OCI-LY7 (cell line): ENCODE measurements at regions of chr1 and their contacts with region 1.

Region 1: GRCh38 chr1:226424228-226425003 is 16.5 kb upstream of the PARP1 start:
- DNase-seq: peak; percentile 87
- H3K4me3 ChIP-seq: peak overlapping the region; percentile 51
- H3K27ac ChIP-seq: peak overlapping the region; percentile 66
- H3K4me1 ChIP-seq: peaks cover 65% of the 10 kb centered on the region
- CTCF ChIP-seq: peak; percentile 98

Region 2: GRCh38 chr1:226438007-226438406 is 13.6 kb after region 1 on chr1:
- CTCF ChIA-PET with region 1: interaction called, 9 read pairs
- POLR2A ChIA-PET with region 1: interaction called, 25 read pairs
- intact Hi-C with region 1: loop called (anchors 1 kb)
- DNase-seq: no peak
- H3K4me3 ChIP-seq: peak overlapping the region; percentile 54
- H3K27ac ChIP-seq: peak overlapping the region; percentile 92
- H3K4me1 ChIP-seq: peaks cover 77% of the 10 kb centered on the region
- CTCF ChIP-seq: peak; percentile 54

Region 3: GRCh38 chr1:226444901-226445300 is 20.5 kb after region 1 on chr1:
- CTCF ChIA-PET with region 1: interaction called, 16 read pairs
- POLR2A ChIA-PET with region 1: interaction called, 17 read pairs
- intact Hi-C with region 1: loop called (anchors 1 kb)
- DNase-seq: peak; percentile 97
- H3K4me3 ChIP-seq: peak overlapping the region; percentile 42
- H3K27ac ChIP-seq: peak overlapping the region; percentile 93
- H3K4me1 ChIP-seq: peaks cover 58% of the 10 kb centered on the region
- CTCF ChIP-seq: peak; percentile 81

Region 4: DNA sequence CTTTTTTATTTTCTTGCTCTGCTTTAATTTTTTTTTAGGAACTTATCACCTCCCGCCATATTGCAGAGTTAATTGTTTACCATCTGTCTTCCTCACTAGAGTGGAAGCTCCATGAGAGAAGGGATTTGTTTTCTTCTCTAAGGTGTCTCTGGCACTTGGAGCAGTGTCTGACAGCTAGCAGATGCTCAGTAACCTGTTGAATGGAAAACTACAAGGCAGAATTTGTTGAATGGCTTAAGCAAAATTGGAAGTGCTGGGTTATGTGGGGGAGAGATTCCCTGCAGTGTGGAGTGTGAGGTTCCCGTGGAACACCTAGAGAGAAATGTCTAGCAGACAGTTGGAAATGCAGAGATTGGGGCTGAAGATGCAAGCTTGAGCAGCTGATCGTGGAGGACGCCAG is 43.0 kb after region 1 on chr1:
- CTCF ChIA-PET with region 1: no interaction called
- POLR2A ChIA-PET with region 1: no interaction called
- intact Hi-C with region 1: no loop called
- DNase-seq: no peak
- H3K4me3 ChIP-seq: no peak overlapping the region
- H3K27ac ChIP-seq: no peak overlapping the region
- H3K4me1 ChIP-seq: no peaks in the 10 kb centered on the region
- CTCF ChIP-seq: no peak

Region 5: GRCh38 chr1:226547754-226548191 is 123.4 kb after region 1 on chr1:
- CTCF ChIA-PET with region 1: interaction called, 5 read pairs
- POLR2A ChIA-PET with region 1: interaction called, 5 read pairs
- intact Hi-C with region 1: loop called (anchors 1 kb)
- DNase-seq: peak; percentile 86
- H3K4me3 ChIP-seq: no peak overlapping the region
- H3K27ac ChIP-seq: no peak overlapping the region
- H3K4me1 ChIP-seq: peaks cover 20% of the 10 kb centered on the region
- CTCF ChIP-seq: peak; percentile 96

Region 6: GRCh38 chr1:226608699-226609505 is 184.5 kb after region 1 on chr1:
- CTCF ChIA-PET with region 1: interaction called, 3 read pairs
- POLR2A ChIA-PET with region 1: interaction called, 4 read pairs
- intact Hi-C with region 1: loop called (anchors 1 kb)
- DNase-seq: peak; percentile 80
- H3K4me3 ChIP-seq: no peak overlapping the region
- H3K27ac ChIP-seq: no peak overlapping the region
- H3K4me1 ChIP-seq: no peaks in the 10 kb centered on the region
- CTCF ChIP-seq: peak; percentile 97

Region 7: DNA sequence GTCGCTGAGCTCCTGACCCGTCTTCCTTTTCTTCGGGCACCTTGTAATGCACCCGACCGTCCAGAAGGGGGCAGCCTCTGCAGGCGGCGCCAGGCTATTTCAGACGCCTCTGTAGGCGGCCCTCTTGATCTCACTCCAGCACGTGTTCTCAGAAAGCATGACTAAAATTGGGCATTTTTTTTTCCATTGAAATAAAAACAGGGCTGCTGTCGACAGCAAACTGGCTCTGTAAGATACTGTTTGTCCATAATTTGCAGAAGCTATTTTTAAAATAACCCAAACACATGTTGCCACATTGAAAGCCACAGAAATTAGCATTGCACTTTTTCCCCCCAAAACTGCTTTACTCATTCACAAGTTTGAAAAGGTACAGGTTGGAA is 202.2 kb after region 1 on chr1:
- CTCF ChIA-PET with region 1: interaction called, 3 read pairs
- POLR2A ChIA-PET with region 1: no interaction called
- intact Hi-C with region 1: loop called (anchors 1 kb)
- DNase-seq: peak; percentile 77
- H3K4me3 ChIP-seq: no peak overlapping the region
- H3K27ac ChIP-seq: no peak overlapping the region
- H3K4me1 ChIP-seq: peaks cover 3% of the 10 kb centered on the region
- CTCF ChIP-seq: peak; percentile 99